Transverse colon (tissue), 4 donors: ENCODE measurements at regions of chr14 and their contacts with region 1.

Region 1: DNA sequence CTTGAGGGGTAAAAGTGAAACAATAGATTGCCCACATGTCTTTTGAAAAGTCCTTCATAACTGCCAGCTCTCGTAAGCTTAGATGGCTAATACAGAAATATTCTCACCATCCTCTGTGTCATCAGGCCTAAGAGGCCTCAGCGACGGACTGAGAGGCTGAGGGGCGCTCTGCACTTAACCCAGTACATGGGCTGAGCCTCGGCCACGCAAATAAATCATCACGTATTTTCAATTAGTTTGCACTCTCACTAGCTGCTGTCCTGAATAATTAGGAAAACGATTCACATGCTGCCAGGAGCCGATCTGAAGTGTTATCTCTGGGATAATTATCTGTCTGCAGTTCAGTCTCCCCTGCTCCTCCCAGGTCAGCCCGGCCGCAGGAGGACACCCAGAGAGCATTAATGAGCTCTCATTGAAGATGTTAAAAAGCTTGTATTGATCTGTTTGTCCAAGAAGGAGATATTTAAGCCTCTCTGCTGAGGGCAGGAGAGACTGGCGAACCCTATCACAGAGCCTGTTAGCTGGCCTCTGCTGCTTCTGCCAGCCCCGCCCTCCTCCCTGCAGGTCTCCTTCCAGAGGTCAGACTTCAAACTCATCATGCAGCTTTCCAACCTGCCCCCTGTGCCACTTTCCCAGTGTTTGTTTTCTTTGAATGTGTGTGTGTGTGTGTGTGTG is 1051.3 kb downstream of the VRK1 start:
- DNase-seq: no peak
- H3K4me3 ChIP-seq: no peak overlapping the region
- H3K27ac ChIP-seq: no peak overlapping the region
- H3K4me1 ChIP-seq: no peaks in the 10 kb centered on the region
- H3K27me3 ChIP-seq: no peaks in the 10 kb centered on the region
- CTCF ChIP-seq: no peak
- EP300 ChIP-seq: no peak
- POLR2A ChIP-seq: no peak

Region 2: GRCh38 chr14:97564334-97564733 is 284.1 kb before region 1 on chr14:
- in situ Hi-C with region 1: no loop called
- intact Hi-C with region 1: no loop called
- DNase-seq: no peak
- H3K4me3 ChIP-seq: no peak overlapping the region
- H3K27ac ChIP-seq: no peak overlapping the region
- H3K4me1 ChIP-seq: no peaks in the 10 kb centered on the region
- H3K27me3 ChIP-seq: no peaks in the 10 kb centered on the region
- CTCF ChIP-seq: no peak
- EP300 ChIP-seq: no peak
- POLR2A ChIP-seq: no peak

Region 3: DNA sequence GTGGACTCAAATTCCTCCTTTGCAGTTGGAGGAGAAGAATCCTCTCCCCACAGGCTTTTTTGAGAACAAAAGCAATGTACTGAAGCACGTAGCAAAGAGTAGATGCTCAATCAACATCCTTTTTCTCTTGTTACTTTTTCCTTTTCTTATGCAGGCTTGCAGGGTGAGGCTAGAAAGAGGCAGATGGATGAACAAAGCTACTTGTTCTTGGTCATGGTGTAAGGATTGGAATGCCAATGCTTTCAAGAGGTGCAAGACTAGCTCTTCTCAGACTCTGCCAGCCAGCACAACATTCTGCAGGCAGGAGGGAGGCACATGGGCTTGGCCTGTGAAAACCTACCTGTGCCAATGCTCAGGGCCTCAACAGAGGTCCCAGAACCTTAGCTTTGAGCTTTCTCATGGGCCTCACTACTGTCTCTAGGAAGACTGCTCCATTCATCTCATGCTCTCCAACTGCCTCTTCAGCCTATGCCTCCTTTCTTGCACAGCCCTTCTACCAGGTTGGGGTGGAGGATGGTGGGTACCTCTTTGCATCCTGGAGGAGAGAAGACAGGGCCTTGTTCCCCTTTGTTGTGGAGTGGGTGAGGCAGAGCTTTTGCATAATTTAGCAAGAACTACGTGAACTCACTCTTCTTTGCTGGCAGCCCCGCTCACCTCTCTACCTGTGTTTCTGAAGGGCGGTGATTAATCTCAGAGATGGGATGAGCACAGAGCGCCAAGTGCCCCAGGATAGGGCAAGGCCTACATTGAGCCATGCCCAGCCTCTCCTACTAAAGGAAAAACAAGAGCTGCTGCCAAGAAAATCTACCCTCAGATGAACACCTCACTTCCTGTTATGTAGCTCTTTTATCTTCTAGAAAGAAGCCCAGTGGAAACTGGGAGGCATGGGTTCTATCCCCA is 68.5 kb after region 1 on chr14:
- in situ Hi-C with region 1: no loop called
- intact Hi-C with region 1: loop called (anchors 2 kb)
- DNase-seq: no peak
- H3K4me3 ChIP-seq: no peak overlapping the region
- H3K27ac ChIP-seq: no peak overlapping the region
- H3K4me1 ChIP-seq: no peaks in the 10 kb centered on the region
- H3K27me3 ChIP-seq: no peaks in the 10 kb centered on the region
- CTCF ChIP-seq: no peak
- EP300 ChIP-seq: no peak
- POLR2A ChIP-seq: no peak

Region 4: GRCh38 chr14:97948841-97949240 is 100.4 kb after region 1 on chr14:
- in situ Hi-C with region 1: no loop called
- intact Hi-C with region 1: no loop called
- DNase-seq: no peak
- H3K4me3 ChIP-seq: no peak overlapping the region
- H3K27ac ChIP-seq: no peak overlapping the region
- H3K4me1 ChIP-seq: no peaks in the 10 kb centered on the region
- H3K27me3 ChIP-seq: no peaks in the 10 kb centered on the region
- CTCF ChIP-seq: no peak
- EP300 ChIP-seq: no peak
- POLR2A ChIP-seq: no peak